Pancreas (tissue), 10 donors: ENCODE measurements at regions of chr3 and their contacts with region 1.

Region 1: GRCh38 chr3:146589899-146590508 is 15.1 kb downstream of the PLSCR5 start:
- DNase-seq: peak in 1 of 6 donors; percentile 28
- ATAC-seq: peak in 3 of 4 donors; percentile 66 to 76 (median 75)
- H3K4me3 ChIP-seq: no peak overlapping the region
- H3K27ac ChIP-seq: no peak overlapping the region
- H3K4me1 ChIP-seq: no peaks in the 10 kb centered on the region
- H3K27me3 ChIP-seq: no peaks in the 10 kb centered on the region
- CTCF ChIP-seq: peak in 3 of 4 donors; percentile 19 to 32 (median 27)

Region 2: DNA sequence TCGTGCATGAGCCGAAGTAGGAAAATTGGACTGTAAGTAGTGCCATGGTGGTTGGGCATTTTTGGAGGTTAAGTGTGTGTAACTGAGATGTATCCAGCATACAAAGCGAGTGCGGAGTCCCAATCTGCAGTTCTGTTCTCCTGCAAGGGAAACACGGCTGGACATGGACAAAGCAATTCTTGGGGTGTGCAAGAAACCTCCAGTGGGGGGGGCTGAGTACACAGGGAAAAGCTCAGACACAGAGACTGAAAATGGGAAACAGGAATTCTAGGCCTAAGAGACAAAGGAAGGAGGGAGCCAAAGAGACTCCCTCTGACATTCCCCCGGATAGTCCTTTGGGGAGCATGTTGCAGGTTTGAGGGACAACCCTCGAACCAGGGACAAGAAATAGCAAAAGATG is 255.9 kb before region 1 on chr3:
- intact Hi-C with region 1: loop called in 1 of 3 experiments (anchors 10 kb)
- DNase-seq: peak in 1 of 6 donors; percentile 29
- ATAC-seq: peak in 1 of 4 donors; percentile 43
- H3K4me3 ChIP-seq: no peak overlapping the region
- H3K27ac ChIP-seq: no peak overlapping the region
- H3K4me1 ChIP-seq: no peaks in the 10 kb centered on the region
- H3K27me3 ChIP-seq: no peaks in the 10 kb centered on the region
- CTCF ChIP-seq: no peak

Region 3: GRCh38 chr3:146638718-146639117 is 48.7 kb after region 1 on chr3:
- intact Hi-C with region 1: loop called in 1 of 3 experiments (anchors 5 kb)
- DNase-seq: no peak
- ATAC-seq: no peak
- H3K4me3 ChIP-seq: no peak overlapping the region
- H3K27ac ChIP-seq: no peak overlapping the region
- H3K4me1 ChIP-seq: peaks cover 0 to 7% (median 0%) of the 10 kb centered on the region in 3 donors
- H3K27me3 ChIP-seq: no peaks in the 10 kb centered on the region
- CTCF ChIP-seq: peak in 1 of 4 donors; percentile 3